HAP-1 (cell line): ENCODE measurements at regions of chr1 and their contacts with region 1.

Region 1: DNA sequence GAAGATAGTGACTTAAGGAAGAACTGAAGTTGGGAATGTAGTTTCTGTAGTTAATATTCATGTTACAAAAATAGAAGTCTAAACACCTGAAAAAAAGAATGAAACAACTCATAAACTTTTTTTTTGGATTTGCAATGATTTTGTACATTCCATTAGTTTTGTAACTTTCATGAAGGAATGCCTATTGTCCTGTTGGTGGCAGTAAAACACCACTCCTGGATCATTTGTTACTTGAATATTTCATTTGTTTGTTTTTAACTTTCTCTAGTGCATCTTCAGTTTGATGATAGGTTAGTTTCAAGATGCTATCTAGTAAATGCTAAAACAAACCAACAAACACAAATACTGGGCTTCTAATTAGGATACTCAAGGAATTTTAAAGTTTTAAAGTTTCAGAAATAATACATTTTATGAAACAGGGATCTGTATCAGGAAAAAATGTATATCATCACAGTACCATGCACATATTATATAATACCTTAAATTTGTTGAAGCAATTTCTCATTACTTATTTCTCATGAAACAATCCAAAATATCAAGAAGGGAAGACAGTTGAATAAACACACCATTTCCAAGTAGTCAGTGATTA is 229.7 kb upstream of the CACYBP start:
- DNase-seq: peak; percentile 11 to 36
- H3K4me3 ChIP-seq: no peak overlapping the region
- H3K4me1 ChIP-seq: no peaks in the 10 kb centered on the region
- H3K27me3 ChIP-seq: no peaks in the 10 kb centered on the region

Region 2: GRCh38 chr1:174999216-174999925 is 229.3 kb after region 1 on chr1:
- in situ Hi-C with region 1: loop called (anchors 5 kb)
- DNase-seq: peak; percentile 86 to 95
- H3K4me3 ChIP-seq: peak overlapping the region; percentile 79
- H3K4me1 ChIP-seq: peaks cover 24% of the 10 kb centered on the region
- H3K27me3 ChIP-seq: no peaks in the 10 kb centered on the region